A549 (cell line): ENCODE measurements at regions of chr20 and their contacts with region 1.

Region 1: GRCh38 chr20:645318-646106 is 7.5 kb downstream of the SRXN1 start:
- DNase-seq: peak; percentile 87 to 91
- ATAC-seq: peak; percentile 57 to 79
- H3K4me3 ChIP-seq: no peak overlapping the region
- H3K27ac ChIP-seq: peak overlapping the region in 1 of 2 experiments; percentile 50; a peak in 2 of 6 replicates
- H3K4me1 ChIP-seq: peaks cover 25% of the 10 kb centered on the region
- CTCF ChIP-seq: peak; percentile 97
- EP300 ChIP-seq: no peak
- POLR2A ChIP-seq: no peak
- RAD21 ChIP-seq: peak; percentile 73 to 78

Region 2: GRCh38 chr20:420641-421574 is 224.6 kb before region 1 on chr20:
- CTCF ChIA-PET with region 1: no interaction called
- POLR2A ChIA-PET with region 1: no interaction called
- DNase-seq: peak; percentile 63 to 70
- ATAC-seq: peak; percentile 11 to 69; a peak in 3 of 6 replicates
- H3K4me3 ChIP-seq: no peak overlapping the region
- H3K27ac ChIP-seq: peak overlapping the region in 1 of 2 experiments; percentile 59; a peak in 3 of 6 replicates
- H3K4me1 ChIP-seq: peaks cover 21% of the 10 kb centered on the region
- CTCF ChIP-seq: no peak
- EP300 ChIP-seq: no peak
- POLR2A ChIP-seq: no peak
- RAD21 ChIP-seq: no peak

Region 3: DNA sequence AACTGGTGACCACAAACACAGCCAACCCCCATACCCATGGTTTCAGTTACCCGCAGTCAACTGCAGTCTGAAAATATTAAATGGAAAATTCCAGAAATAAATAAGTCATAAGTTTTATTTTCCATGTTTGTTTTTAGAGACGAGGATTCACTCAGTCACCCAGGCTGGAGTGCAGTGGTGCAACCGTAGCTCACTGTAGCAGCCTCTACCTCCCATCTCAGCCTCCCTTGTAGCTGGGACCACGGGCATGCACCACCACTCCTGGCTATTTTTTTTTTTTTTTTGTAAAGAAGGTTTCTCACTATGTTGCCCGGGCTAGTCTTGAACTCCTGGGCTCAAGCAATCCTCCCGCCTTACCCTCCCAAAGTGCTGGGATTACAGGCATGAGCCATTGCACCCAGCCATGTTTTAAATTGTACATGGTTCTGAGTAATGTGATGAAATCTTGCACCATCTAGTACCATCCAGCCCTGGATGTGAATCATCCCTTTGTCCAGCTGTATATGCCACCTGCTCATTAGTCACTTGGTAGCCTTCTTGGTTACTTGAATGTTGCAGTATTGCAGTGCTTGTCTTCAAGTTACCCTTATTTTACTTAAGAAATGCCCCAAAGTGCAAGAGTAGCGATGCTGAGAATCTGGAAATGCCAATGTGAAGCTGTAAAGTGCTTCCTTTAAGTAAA is 116.4 kb before region 1 on chr20:
- CTCF ChIA-PET with region 1: no interaction called
- POLR2A ChIA-PET with region 1: no interaction called
- DNase-seq: peak; percentile 58 to 65
- ATAC-seq: peak; percentile 75 to 96
- H3K4me3 ChIP-seq: no peak overlapping the region
- H3K27ac ChIP-seq: peak overlapping the region; percentile 82
- H3K4me1 ChIP-seq: peaks cover 59% of the 10 kb centered on the region
- CTCF ChIP-seq: no peak
- EP300 ChIP-seq: peak; percentile 46 to 50; a peak in 2 of 5 replicates
- POLR2A ChIP-seq: no peak
- RAD21 ChIP-seq: no peak

Region 4: DNA sequence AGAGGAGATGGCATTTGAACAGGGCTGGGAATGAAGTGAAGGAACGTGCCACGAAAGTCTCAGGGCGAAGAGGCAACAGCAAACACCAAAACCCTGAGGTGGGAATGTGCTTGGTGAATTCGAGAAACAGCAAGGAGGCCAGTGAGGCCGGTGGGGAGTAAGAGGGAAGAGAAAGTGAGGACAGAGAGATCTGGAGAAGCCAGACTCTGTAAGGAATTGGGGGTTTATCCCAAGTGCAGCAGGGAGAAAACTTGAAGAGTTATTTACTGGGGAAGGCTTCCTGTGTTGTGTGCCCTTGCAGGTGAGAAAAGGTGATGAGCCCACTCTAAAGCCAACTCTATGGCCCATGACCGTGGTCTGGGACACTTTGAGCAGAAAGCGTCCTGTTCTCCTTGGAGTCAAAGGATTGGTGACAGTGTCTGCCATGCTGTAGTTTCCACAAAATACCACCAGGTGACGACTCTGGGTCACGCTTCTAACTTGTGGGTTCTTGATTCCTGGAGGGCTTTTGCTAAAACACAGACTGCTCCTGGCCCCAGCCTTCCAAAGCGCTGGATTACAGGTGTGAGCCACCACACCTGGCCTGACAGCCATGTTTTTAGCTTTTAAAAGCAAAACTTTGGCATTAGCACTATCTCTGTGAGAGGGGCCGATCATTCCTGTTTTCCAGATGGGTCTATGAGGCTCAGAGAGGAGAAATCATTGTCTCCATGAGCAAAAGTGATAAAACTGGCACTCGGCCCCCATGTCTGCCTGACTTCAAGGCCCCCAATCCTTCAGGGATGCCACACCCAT is 83.9 kb before region 1 on chr20:
- CTCF ChIA-PET with region 1: interaction called, 87 read pairs
- POLR2A ChIA-PET with region 1: interaction called, 3 read pairs
- DNase-seq: peak; percentile 80 to 87
- ATAC-seq: peak; percentile 78 to 93
- H3K4me3 ChIP-seq: no peak overlapping the region
- H3K27ac ChIP-seq: no peak overlapping the region
- H3K4me1 ChIP-seq: no peaks in the 10 kb centered on the region
- CTCF ChIP-seq: peak; percentile 98
- EP300 ChIP-seq: no peak
- POLR2A ChIP-seq: no peak
- RAD21 ChIP-seq: peak; percentile 95 to 97

Region 5: DNA sequence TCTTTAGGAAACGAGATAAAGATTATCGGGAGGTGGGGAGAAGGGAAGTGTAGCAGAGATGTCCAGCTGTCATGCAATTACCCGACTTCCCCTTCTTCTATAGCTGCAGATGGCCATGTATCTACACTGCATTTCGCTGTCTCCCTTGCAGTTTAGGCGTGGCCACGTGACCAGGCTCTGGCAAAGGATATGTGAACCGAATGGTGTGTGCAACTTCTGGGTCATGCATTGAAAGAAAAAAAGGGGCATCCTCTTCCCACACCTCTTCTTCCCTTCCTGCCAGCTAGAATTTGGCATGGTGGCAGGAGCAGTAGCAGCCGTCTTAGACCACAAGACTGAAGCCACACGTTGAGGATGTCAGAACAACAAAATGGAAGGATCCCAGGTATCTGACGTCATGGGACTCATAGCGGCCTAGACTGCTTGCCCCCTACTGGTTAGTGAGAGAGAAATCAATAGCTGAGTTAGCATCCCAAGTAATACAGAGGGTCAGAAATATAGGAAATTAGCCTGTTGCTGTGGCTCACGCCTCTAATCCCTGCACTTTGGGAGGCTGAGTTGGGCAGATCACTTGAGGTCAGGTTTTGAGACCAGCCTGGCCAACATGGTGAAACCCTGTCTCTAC is 68.2 kb before region 1 on chr20:
- CTCF ChIA-PET with region 1: interaction called, 14 read pairs
- POLR2A ChIA-PET with region 1: no interaction called
- DNase-seq: peak; percentile 55 to 79
- ATAC-seq: peak; percentile 58 to 91; a peak in 4 of 6 replicates
- H3K4me3 ChIP-seq: no peak overlapping the region
- H3K27ac ChIP-seq: no peak overlapping the region
- H3K4me1 ChIP-seq: no peaks in the 10 kb centered on the region
- CTCF ChIP-seq: peak; percentile 24; the same call in 1 of the 3 replicates
- EP300 ChIP-seq: no peak
- POLR2A ChIP-seq: no peak
- RAD21 ChIP-seq: no peak

Region 6: GRCh38 chr20:621125-621756 is 24.3 kb before region 1 on chr20:
- CTCF ChIA-PET with region 1: interaction called, 43 read pairs
- POLR2A ChIA-PET with region 1: no interaction called
- DNase-seq: no peak
- ATAC-seq: peak; percentile 23 to 42; a peak in 3 of 6 replicates
- H3K4me3 ChIP-seq: no peak overlapping the region
- H3K27ac ChIP-seq: no peak overlapping the region
- H3K4me1 ChIP-seq: no peaks in the 10 kb centered on the region
- CTCF ChIP-seq: no peak
- EP300 ChIP-seq: no peak
- POLR2A ChIP-seq: no peak
- RAD21 ChIP-seq: no peak

Region 7: GRCh38 chr20:658731-659291 is 13.3 kb after region 1 on chr20:
- CTCF ChIA-PET with region 1: interaction called, 24 read pairs
- POLR2A ChIA-PET with region 1: no interaction called
- DNase-seq: no peak
- ATAC-seq: no peak
- H3K4me3 ChIP-seq: no peak overlapping the region
- H3K27ac ChIP-seq: peak overlapping the region; percentile 66 to 69; a peak in 4 of 6 replicates
- H3K4me1 ChIP-seq: peaks cover 53% of the 10 kb centered on the region
- CTCF ChIP-seq: no peak
- EP300 ChIP-seq: no peak
- POLR2A ChIP-seq: no peak
- RAD21 ChIP-seq: no peak

Region 8: DNA sequence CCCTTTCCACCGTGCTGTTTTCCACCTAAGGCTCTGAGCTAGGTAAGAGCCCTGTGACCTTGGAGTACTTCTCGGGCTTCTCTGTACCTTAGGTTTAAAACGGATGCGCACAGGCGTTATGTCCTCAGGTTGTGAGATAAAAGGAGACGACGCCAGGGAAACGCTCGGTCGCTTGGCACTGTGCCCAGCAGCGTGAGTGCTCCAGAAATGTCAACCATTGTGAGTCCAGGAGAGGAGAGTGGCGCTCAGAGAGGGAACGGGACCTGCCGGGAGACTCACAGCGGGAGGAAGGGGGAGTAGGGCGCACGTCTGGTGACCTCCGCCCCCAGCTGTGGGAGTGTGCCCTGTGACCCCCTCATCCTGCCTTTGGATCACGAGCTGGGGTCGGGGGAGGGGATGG is 63.9 kb after region 1 on chr20:
- CTCF ChIA-PET with region 1: interaction called, 12 read pairs
- POLR2A ChIA-PET with region 1: no interaction called
- DNase-seq: no peak
- ATAC-seq: no peak
- H3K4me3 ChIP-seq: no peak overlapping the region
- H3K27ac ChIP-seq: no peak overlapping the region
- H3K4me1 ChIP-seq: no peaks in the 10 kb centered on the region
- CTCF ChIP-seq: no peak
- EP300 ChIP-seq: no peak
- POLR2A ChIP-seq: no peak
- RAD21 ChIP-seq: no peak